Left ventricle myocardium superior (tissue), 1 donor: ENCODE measurements at regions of chr1 and their contacts with region 1.

Region 1: GRCh38 chr1:181189691-181190363 is 101.3 kb downstream of the IER5 start:
- DNase-seq: peak; percentile 85
- ATAC-seq: peak; percentile 95

Region 2: DNA sequence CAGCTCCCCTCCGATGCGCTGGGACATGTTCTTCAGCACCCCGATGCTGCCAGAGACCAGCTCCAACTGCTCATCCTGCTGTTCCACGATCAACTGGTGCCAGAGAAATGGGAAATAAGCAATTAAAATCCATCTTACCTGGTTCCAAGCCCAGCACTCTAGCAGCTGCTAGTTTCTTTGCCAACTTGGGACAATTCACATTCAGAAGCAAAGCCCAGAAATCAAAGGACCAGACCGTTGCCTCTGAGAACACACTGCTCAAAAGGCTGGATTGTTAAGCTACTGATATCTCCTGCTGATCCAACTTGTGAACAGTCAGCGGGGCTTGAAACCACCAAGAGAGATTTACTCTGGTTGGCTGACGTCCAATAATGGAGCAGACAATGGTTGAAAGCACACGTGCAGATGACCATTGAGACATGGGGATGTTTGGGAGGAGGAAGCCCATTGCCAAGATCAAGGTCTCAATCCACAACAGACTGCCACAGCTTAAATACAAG is 201.5 kb before region 1 on chr1:
- intact Hi-C with region 1: no loop called
- DNase-seq: no peak
- ATAC-seq: no peak

Region 3: DNA sequence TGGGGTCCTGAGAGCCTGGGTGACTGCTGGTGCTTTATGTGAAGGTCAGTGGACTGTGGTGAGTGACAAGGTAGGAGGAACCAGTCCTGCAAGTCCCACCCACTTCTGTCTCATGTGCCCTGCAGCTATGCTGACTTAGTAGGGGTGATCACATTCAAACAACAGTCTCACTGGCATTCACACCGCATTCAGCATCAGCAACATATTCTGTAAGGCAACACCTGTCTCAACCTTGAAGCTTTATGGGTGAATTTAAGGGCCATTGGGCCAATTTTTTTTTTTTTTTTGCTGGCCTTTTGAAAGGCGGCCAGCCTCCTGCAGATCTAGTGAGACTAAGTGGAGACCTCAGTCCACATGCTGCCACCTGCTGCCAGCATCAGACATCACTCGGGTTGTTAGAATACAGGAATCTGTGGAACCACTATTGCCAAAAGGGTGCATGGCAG is 233.6 kb after region 1 on chr1:
- intact Hi-C with region 1: loop called (anchors 2 kb)
- DNase-seq: peak; percentile 65
- ATAC-seq: peak; percentile 81